CD4-positive, alpha-beta T cell (primary cell): ENCODE measurements at regions of chr11 and their contacts with region 1.

Region 1: GRCh38 chr11:66579017-66579606 is 10.7 kb upstream of the CTSF start:
- DNase-seq: peak; percentile 60 to 89 (median 72)
- ATAC-seq: peak; percentile 82
- H3K4me3 ChIP-seq: no peak overlapping the region
- H3K4me3 Mint-ChIP-seq: no peak overlapping the region
- H3K27ac ChIP-seq: no peak overlapping the region
- H3K27ac Mint-ChIP-seq: no peak overlapping the region
- H3K4me1 ChIP-seq: peaks cover 8% of the 10 kb centered on the region
- H3K4me1 Mint-ChIP-seq: peaks cover 8% of the 10 kb centered on the region
- H3K27me3 ChIP-seq: no peaks in the 10 kb centered on the region
- H3K27me3 Mint-ChIP-seq: peaks cover 6% of the 10 kb centered on the region
- CTCF ChIP-seq: peak; percentile 85

Region 2: GRCh38 chr11:66203847-66204246 is 375.3 kb before region 1 on chr11:
- CTCF ChIA-PET with region 1: no interaction called
- POLR2A ChIA-PET with region 1: no interaction called
- intact Hi-C with region 1: no loop called
- DNase-seq: no peak
- ATAC-seq: no peak
- H3K4me3 ChIP-seq: no peak overlapping the region
- H3K4me3 Mint-ChIP-seq: no peak overlapping the region
- H3K27ac ChIP-seq: no peak overlapping the region
- H3K27ac Mint-ChIP-seq: peak overlapping the region; percentile 21
- H3K4me1 ChIP-seq: no peaks in the 10 kb centered on the region
- H3K4me1 Mint-ChIP-seq: no peaks in the 10 kb centered on the region
- H3K27me3 ChIP-seq: no peaks in the 10 kb centered on the region
- H3K27me3 Mint-ChIP-seq: no peaks in the 10 kb centered on the region
- CTCF ChIP-seq: no peak

Region 3: DNA sequence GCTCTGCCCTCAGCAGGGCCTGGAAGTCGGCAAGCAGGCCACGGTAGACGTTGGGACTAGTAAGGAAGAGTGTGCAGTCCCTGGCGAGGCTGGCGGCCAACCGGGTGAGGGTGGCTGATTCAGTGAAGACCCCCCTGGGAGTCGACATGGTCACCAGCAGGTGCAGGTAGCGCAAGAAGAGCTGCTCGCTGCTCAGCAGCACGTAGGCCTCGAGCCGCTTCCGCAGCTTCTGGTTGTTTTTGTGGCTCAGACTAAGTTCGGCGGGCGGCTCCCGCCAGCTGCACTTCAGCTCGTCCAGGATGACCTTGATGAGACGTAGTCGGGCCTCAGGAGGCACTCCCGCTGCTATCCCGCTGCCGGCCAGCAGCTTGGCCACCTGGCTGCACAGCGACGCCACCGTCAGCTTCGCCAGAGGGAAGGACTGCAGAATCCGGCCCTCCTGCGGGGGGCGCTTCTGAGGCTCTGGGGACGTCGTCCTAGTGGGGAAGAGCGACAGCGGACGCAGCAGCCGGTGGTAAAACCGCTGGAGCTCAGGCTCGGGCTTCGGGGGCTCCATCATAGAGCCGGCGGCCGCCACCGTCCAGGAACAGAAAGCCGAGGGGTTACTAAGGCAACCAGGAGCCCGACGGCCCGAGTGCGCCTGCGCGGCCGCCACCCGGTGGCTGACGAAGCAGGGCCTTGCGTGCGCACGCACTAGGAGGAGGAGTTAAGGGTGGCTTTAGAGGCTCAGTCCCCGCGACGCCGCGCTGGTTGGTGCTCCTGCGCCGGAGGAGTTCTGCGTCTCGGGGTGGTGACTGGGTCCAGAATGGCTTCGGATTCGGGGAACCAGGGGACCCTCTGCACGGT is 13.6 kb after region 1 on chr11 and contains the starts of genes CCDC87 and CCS:
- CTCF ChIA-PET with region 1: interaction called, 10 read pairs
- POLR2A ChIA-PET with region 1: no interaction called
- intact Hi-C with region 1: no loop called
- DNase-seq: peak; percentile 98 to 100 (median 99)
- ATAC-seq: peak; percentile 99
- H3K4me3 ChIP-seq: peak within 1 kb of the TSS; percentile 79
- H3K4me3 Mint-ChIP-seq: peak within 1 kb of the TSS; percentile 98
- H3K27ac ChIP-seq: peak within 1 kb of the TSS; percentile 58 to 81
- H3K27ac Mint-ChIP-seq: peak within 1 kb of the TSS; percentile 85
- H3K4me1 ChIP-seq: peaks cover 39% of the 10 kb centered on the region
- H3K4me1 Mint-ChIP-seq: peaks cover 23% of the 10 kb centered on the region
- H3K27me3 ChIP-seq: no peaks in the 10 kb centered on the region
- H3K27me3 Mint-ChIP-seq: no peaks in the 10 kb centered on the region
- CTCF ChIP-seq: peak; percentile 55
- total RNA-seq, gene CCDC87: 0.22 to 0.25 TPM
- total RNA-seq, gene CCS: 25.4 to 26.3 TPM

Region 4: GRCh38 chr11:66834501-66834845 is 255.4 kb after region 1 on chr11:
- CTCF ChIA-PET with region 1: no interaction called
- POLR2A ChIA-PET with region 1: no interaction called
- intact Hi-C with region 1: loop called in 1 of 2 experiments (anchors 5 kb)
- DNase-seq: peak in 1 of 14 experiments; percentile 9
- ATAC-seq: no peak
- H3K4me3 ChIP-seq: no peak overlapping the region
- H3K4me3 Mint-ChIP-seq: no peak overlapping the region
- H3K27ac ChIP-seq: no peak overlapping the region
- H3K27ac Mint-ChIP-seq: peak overlapping the region; percentile 9
- H3K4me1 ChIP-seq: peaks cover 3% of the 10 kb centered on the region
- H3K4me1 Mint-ChIP-seq: peaks cover 11% of the 10 kb centered on the region
- H3K27me3 ChIP-seq: no peaks in the 10 kb centered on the region
- H3K27me3 Mint-ChIP-seq: no peaks in the 10 kb centered on the region
- CTCF ChIP-seq: peak; percentile 59